Activated CD8-positive, alpha-beta T cell treated with anti-CD3 and anti-CD28 coated beads, Interleukin-2, amount 10 ng/mL, durations not matched to agents 7 days and 5 days (primary cell): ENCODE measurements at regions of chr19 and their contacts with region 1.

Region 1: GRCh38 chr19:13033819-13034611 is 38.7 kb downstream of the NFIX start:
- DNase-seq: peak; percentile 59
- ATAC-seq: peak; percentile 86
- H3K4me3 Mint-ChIP-seq: no peak overlapping the region
- H3K27ac Mint-ChIP-seq: no peak overlapping the region
- H3K4me1 Mint-ChIP-seq: peaks cover 4% of the 10 kb centered on the region
- H3K27me3 Mint-ChIP-seq: no peaks in the 10 kb centered on the region

Region 2: GRCh38 chr19:12983542-12984142 is 50.4 kb before region 1 on chr19:
- CTCF ChIA-PET with region 1: interaction called, 52 read pairs
- POLR2A ChIA-PET with region 1: no interaction called
- DNase-seq: peak; percentile 82
- ATAC-seq: peak; percentile 78
- H3K4me3 Mint-ChIP-seq: no peak overlapping the region
- H3K27ac Mint-ChIP-seq: no peak overlapping the region
- H3K4me1 Mint-ChIP-seq: no peaks in the 10 kb centered on the region
- H3K27me3 Mint-ChIP-seq: peaks cover 2% of the 10 kb centered on the region

Region 3: GRCh38 chr19:13012690-13013608 is 21.1 kb before region 1 on chr19:
- CTCF ChIA-PET with region 1: interaction called, 11 read pairs
- POLR2A ChIA-PET with region 1: no interaction called
- DNase-seq: peak; percentile 49
- ATAC-seq: peak; percentile 35
- H3K4me3 Mint-ChIP-seq: peak overlapping the region; percentile 74
- H3K27ac Mint-ChIP-seq: no peak overlapping the region
- H3K4me1 Mint-ChIP-seq: peaks cover 21% of the 10 kb centered on the region
- H3K27me3 Mint-ChIP-seq: peaks cover 78% of the 10 kb centered on the region

Region 4: DNA sequence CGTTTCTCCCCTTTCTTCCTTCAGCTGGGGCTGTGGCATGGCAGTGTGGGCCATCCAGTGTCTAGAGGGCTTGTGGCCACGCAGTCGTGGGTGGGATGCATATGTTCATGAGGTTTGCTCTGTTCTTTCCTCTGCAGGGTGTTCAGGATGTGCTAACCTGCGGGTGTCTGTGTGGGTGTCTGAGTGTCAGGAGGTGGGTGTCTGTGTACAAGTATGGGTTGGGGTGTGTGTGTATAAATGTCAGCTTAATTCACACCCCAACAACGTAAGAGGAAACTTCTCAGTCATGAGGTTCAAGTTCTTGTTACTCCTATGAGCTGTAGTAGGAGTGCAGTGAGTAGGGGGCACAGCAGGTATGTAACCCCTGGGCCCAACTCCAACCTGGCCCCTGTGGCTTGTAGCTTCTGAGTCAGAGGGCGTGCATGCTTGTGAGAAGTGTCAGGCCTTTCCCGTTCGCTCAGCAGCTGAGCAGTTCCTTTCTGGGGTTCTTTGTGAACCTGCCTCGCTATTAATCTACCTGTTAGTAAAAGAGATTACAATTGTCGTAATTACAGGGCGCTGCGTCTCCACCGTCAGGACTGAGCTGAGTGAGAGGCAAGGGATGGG is 10.3 kb after region 1 on chr19:
- CTCF ChIA-PET with region 1: interaction called, 29 read pairs
- POLR2A ChIA-PET with region 1: no interaction called
- DNase-seq: peak; percentile 39
- ATAC-seq: peak; percentile 68
- H3K4me3 Mint-ChIP-seq: no peak overlapping the region
- H3K27ac Mint-ChIP-seq: peak overlapping the region; percentile 52
- H3K4me1 Mint-ChIP-seq: peaks cover 24% of the 10 kb centered on the region
- H3K27me3 Mint-ChIP-seq: peaks cover 3% of the 10 kb centered on the region

Region 5: GRCh38 chr19:13051267-13052165 is 17.5 kb after region 1 on chr19:
- CTCF ChIA-PET with region 1: interaction called, 29 read pairs
- POLR2A ChIA-PET with region 1: no interaction called
- DNase-seq: no peak
- ATAC-seq: peak; percentile 57
- H3K4me3 Mint-ChIP-seq: no peak overlapping the region
- H3K27ac Mint-ChIP-seq: no peak overlapping the region
- H3K4me1 Mint-ChIP-seq: peaks cover 7% of the 10 kb centered on the region
- H3K27me3 Mint-ChIP-seq: peaks cover 14% of the 10 kb centered on the region

Region 6: GRCh38 chr19:13093407-13094105 is 59.5 kb after region 1 on chr19:
- CTCF ChIA-PET with region 1: interaction called, 15 read pairs
- POLR2A ChIA-PET with region 1: no interaction called
- DNase-seq: peak; percentile 88
- ATAC-seq: peak; percentile 79
- H3K4me3 Mint-ChIP-seq: no peak overlapping the region
- H3K27ac Mint-ChIP-seq: no peak overlapping the region
- H3K4me1 Mint-ChIP-seq: peaks cover 26% of the 10 kb centered on the region
- H3K27me3 Mint-ChIP-seq: peaks cover 32% of the 10 kb centered on the region